ENCODE measurements at regions of chr15 and their contacts with region 1.

Region 1: GRCh38 chr15:101008158-101009139 is 89.3 kb downstream of the LRRK1 start:
- DNase-seq: peak; percentile 92
- H3K4me3 Mint-ChIP-seq: peak overlapping the region; percentile 81
- H3K27ac Mint-ChIP-seq: no peak overlapping the region
- H3K4me1 Mint-ChIP-seq: peaks cover 18% of the 10 kb centered on the region
- H3K27me3 Mint-ChIP-seq: peaks cover 3% of the 10 kb centered on the region

Region 2: GRCh38 chr15:100671858-100672543 is 336.4 kb before region 1 on chr15:
- CTCF ChIA-PET with region 1: no interaction called
- intact Hi-C with region 1: loop called (anchors 5 kb)
- DNase-seq: no peak
- H3K4me3 Mint-ChIP-seq: no peak overlapping the region
- H3K27ac Mint-ChIP-seq: no peak overlapping the region
- H3K4me1 Mint-ChIP-seq: no peaks in the 10 kb centered on the region
- H3K27me3 Mint-ChIP-seq: no peaks in the 10 kb centered on the region

Region 3: DNA sequence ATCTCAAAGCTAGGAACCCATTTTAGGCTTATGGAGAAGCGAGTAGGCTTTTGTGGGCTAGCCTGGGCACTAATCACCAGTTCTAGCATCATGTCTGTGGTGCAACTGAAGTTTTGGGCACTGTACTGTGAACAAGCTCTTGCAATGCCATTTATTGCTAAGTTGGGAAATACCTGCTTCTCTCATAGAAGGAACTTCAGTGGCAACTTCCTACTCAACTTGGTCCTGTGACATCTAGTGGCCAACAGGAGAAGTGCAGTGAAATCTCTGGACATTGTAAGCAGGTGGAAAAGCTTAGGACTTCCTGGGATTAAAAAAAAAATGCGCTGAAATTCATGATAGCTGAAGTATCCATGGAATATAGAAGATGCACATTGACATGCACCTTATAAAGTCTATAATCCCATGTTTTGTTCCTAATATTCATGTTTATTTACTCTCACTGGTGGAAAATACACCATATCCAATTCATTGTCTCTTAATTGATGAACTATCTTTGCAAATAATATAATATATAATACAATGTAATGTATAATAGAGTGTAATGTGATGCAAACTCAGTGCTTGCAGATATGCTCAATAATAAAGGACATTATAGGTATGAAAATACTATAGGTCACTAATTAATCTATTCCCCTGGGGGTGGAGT is 135.3 kb before region 1 on chr15:
- CTCF ChIA-PET with region 1: interaction called, 7 read pairs
- intact Hi-C with region 1: loop called (anchors 5 kb)
- DNase-seq: peak; percentile 74
- H3K4me3 Mint-ChIP-seq: no peak overlapping the region
- H3K27ac Mint-ChIP-seq: no peak overlapping the region
- H3K4me1 Mint-ChIP-seq: no peaks in the 10 kb centered on the region
- H3K27me3 Mint-ChIP-seq: peaks cover 26% of the 10 kb centered on the region

Region 4: DNA sequence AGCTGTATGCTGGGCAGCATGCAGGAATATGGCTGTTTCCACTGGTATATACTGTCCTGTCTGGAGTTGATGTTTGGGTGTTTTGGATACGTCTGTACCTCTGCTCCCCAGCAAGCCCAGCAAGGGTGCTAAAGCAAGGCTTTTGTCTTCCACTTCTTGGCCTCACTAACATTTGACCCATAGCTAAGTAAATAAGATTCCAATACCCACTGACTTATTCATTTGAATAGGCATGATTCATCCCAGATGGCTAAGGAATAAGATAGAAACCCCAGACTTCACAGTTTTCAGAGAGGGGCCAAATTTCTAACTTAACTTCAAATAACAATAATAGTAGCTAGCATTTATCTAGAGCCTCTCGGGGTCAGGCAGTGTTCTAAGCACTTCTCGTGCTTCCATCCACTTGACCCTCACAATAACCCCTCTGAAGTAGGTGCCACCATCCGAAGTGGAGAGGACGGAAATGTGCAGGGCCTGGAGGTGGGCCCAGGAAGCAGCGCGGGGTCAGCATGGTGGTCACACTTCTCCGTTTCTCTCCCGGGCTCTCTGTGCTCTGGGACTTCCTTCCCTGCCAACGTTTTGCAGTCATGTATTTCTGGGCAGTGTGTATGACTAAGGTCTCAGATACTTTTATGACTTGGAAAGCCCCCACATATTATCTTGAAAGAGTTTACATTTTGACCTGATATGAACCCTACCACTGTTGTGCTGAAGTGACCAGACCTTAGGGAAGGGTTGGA is 50.0 kb before region 1 on chr15:
- CTCF ChIA-PET with region 1: no interaction called
- intact Hi-C with region 1: no loop called
- DNase-seq: no peak
- H3K4me3 Mint-ChIP-seq: no peak overlapping the region
- H3K27ac Mint-ChIP-seq: no peak overlapping the region
- H3K4me1 Mint-ChIP-seq: no peaks in the 10 kb centered on the region
- H3K27me3 Mint-ChIP-seq: peaks cover 27% of the 10 kb centered on the region

Region 5: GRCh38 chr15:100983221-100983620 is 25.2 kb before region 1 on chr15:
- CTCF ChIA-PET with region 1: interaction called, 12 read pairs
- intact Hi-C with region 1: no loop called
- DNase-seq: no peak
- H3K4me3 Mint-ChIP-seq: no peak overlapping the region
- H3K27ac Mint-ChIP-seq: no peak overlapping the region
- H3K4me1 Mint-ChIP-seq: no peaks in the 10 kb centered on the region
- H3K27me3 Mint-ChIP-seq: peaks cover 4% of the 10 kb centered on the region

Region 6: GRCh38 chr15:101646672-101647071 is 638.2 kb after region 1 on chr15:
- CTCF ChIA-PET with region 1: no interaction called
- intact Hi-C with region 1: loop called (anchors 5 kb)
- DNase-seq: no peak
- H3K4me3 Mint-ChIP-seq: no peak overlapping the region
- H3K27ac Mint-ChIP-seq: peak overlapping the region; percentile 72
- H3K4me1 Mint-ChIP-seq: peaks cover 54% of the 10 kb centered on the region
- H3K27me3 Mint-ChIP-seq: no peaks in the 10 kb centered on the region